Ascending aorta (tissue), 2 donors: ENCODE measurements at regions of chr19 and their contacts with region 1.

Region 1: DNA sequence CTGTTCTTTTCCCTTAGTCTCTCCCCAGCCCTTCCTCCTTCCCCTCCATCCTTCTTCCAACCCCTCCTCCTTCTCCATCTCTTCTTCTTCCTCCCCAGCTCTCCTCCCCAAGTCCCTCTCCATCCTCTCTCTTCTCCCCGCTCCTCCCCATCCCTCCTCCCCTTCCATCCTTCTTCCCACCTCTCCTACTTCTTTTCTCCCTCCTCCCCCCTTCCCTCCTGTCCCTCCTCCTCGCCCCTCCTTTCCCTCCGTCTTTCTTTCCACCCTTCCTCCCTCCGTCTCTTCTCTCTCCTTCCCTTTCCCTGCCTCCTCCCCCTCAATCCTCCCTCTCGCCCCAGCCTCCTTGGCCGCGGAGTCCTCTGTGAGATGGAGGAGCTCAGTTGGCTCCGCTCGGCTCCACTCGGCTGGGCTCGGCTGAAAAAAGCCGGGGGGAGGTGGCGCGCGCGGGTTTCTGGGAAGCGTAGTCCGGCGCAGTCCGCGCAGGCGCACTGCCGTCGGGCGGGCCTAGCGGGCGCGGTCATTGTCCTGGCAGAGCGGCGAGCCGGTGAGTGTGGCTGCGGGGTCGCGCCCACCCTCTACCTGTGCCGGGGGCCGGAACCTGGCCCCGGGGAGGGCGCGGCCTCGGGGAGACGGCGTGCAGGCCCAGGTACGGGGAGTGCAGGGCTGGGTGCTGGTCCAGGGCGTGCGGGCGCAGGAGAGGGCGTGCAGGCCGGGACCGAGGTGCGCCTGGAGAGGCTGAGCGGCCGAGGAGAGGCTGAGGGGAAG is at the start of gene ZNF71:
- DNase-seq: peak; percentile 43 to 93
- H3K4me3 ChIP-seq: peak within 1 kb of the TSS; percentile 92 to 98
- H3K27ac ChIP-seq: peak within 1 kb of the TSS; percentile 67 to 75
- H3K4me1 ChIP-seq: no peaks in the 10 kb centered on the region
- H3K27me3 ChIP-seq: no peaks in the 10 kb centered on the region
- CTCF ChIP-seq: no peak
- total RNA-seq, gene ZNF71: 30.5 TPM

Region 2: DNA sequence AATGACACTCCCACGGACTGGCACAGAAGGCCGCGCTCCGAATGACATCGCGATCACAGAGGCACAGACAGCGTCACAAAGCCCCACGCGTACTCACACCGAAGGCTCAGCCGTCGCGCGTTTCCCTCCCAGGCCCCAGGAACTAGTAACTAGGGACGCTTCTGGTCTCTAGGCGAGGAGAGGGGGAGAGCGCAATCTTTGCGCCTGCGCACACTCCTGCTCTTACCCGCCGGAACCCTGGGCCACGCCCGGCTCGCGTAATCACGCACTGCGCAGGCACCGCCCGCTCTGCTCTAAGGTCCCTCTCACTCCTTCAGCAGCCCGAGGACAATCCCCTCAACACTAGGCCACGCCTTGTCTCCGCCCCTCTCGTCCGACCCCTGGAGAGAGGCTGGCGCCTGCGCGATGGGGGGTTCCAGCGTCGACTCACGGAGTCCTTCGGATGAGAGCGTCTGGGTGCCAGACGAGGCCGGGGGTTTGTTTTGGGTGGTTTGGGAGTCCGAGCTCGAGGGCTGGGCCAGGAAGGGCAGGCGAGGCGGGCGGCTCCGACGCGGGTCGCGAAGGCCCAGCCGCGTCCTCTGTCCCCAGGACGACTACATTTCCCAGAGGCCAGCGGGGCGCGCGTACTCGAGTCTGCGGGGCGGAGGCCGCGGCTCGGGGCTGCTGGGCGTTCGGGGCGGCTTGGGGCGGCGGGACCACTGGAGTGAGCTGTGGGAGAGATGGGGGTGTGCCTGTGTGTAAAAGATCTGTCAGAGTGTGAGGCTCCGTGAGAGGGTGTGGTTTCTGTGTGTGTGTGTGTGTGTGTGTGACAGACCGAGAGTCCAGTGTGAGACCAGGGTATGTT is 87.3 kb before region 1 on chr19 and contains the start of gene ZNF471:
- intact Hi-C with region 1: loop called (anchors 1 kb)
- DNase-seq: peak; percentile 94 to 99
- H3K4me3 ChIP-seq: peak within 1 kb of the TSS; percentile 56 to 94
- H3K27ac ChIP-seq: peak within 1 kb of the TSS; percentile 92 to 100
- H3K4me1 ChIP-seq: peaks cover 0 to 5% of the 10 kb centered on the region in 2 donors
- H3K27me3 ChIP-seq: no peaks in the 10 kb centered on the region
- CTCF ChIP-seq: no peak
- total RNA-seq, gene ZNF471: 4.8 TPM

Region 3: GRCh38 chr19:56538254-56538760 is 56.7 kb before region 1 on chr19:
- intact Hi-C with region 1: loop called (anchors 2 kb)
- DNase-seq: peak; percentile 45 to 93
- H3K4me3 ChIP-seq: peak overlapping the region; percentile 85 to 92
- H3K27ac ChIP-seq: peak overlapping the region; percentile 91 to 94
- H3K4me1 ChIP-seq: peaks cover 0 to 10% of the 10 kb centered on the region in 2 donors
- H3K27me3 ChIP-seq: no peaks in the 10 kb centered on the region
- CTCF ChIP-seq: no peak

Region 4: DNA sequence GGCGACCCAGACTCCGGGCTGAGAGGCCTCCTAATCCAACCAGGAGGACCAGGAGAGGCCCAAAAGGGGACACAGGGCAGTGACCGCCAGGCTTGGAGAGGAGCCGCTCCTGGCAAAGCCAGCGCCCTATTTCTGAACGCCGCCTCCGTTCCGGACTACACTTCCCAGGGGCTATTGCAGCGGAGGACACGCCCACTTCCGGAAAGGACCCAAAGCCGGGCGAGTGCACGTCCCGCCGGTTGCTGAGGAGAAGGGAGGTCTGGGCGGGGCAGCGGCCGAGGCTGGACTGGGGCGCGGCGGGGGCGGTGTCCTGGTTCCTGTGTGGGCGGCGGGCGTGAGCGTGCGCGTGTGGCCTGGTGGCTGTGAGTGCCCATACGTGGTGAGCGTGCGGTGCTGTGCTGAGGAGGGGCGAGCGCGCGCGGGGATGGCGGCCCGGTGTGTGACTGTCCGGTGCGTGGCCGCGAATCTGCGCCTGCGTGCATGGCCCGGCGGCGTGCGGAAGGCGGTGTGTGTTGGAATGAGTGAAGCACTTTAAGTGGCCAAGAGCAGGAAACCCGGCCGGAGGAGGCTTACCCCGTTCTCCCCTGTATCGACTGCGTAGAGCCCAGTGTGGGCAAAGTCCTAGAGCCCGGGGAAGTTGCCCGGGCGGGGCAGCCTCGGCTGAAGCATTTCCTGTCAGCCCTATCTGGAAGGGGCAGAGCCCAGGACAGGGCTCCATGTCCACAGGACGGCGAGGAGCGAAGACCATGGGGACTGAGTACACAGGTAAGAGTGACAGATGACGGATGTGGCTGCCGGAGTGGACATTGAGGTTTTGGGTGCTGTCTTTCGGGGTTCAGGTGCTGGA is 27.5 kb before region 1 on chr19 and contains the start of gene ZNF470:
- intact Hi-C with region 1: loop called (anchors 1 kb)
- DNase-seq: peak; percentile 82 to 97
- H3K4me3 ChIP-seq: peak within 1 kb of the TSS; percentile 82 to 90
- H3K27ac ChIP-seq: peak within 1 kb of the TSS; percentile 76 to 80
- H3K4me1 ChIP-seq: peaks cover 0 to 4% of the 10 kb centered on the region in 2 donors
- H3K27me3 ChIP-seq: no peaks in the 10 kb centered on the region
- CTCF ChIP-seq: no peak
- total RNA-seq, gene ZNF470: 0.21 TPM

Region 5: GRCh38 chr19:56671613-56671994 is 76.6 kb after region 1 on chr19 and contains the start of gene ZNF835:
- intact Hi-C with region 1: loop called (anchors 2 kb)
- DNase-seq: peak; percentile 63 to 94
- H3K4me3 ChIP-seq: peak within 1 kb of the TSS; percentile 57 to 79
- H3K27ac ChIP-seq: no peak within 1 kb of the TSS
- H3K4me1 ChIP-seq: peaks cover 0 to 7% of the 10 kb centered on the region in 2 donors
- H3K27me3 ChIP-seq: no peaks in the 10 kb centered on the region
- CTCF ChIP-seq: peak in 2 of 3 experiments; percentile 26 to 34
- total RNA-seq, gene ZNF835: 4.0 TPM

Region 6: GRCh38 chr19:57814505-57815251 is 1219.7 kb after region 1 on chr19 and contains the start of gene ZNF552:
- intact Hi-C with region 1: loop called (anchors 5 kb)
- DNase-seq: peak; percentile 70 to 93
- H3K4me3 ChIP-seq: peak within 1 kb of the TSS; percentile 85 to 87
- H3K27ac ChIP-seq: peak within 1 kb of the TSS; percentile 71 to 75
- H3K4me1 ChIP-seq: peaks cover 2 to 8% of the 10 kb centered on the region in 2 donors
- H3K27me3 ChIP-seq: no peaks in the 10 kb centered on the region
- CTCF ChIP-seq: no peak
- total RNA-seq, gene ZNF552: 6.9 TPM